Uterus (tissue), 4 donors: ENCODE measurements at regions of chr14 and their contacts with region 1.

Region 1: GRCh38 chr14:32576088-32576795 is 247.1 kb downstream of the AKAP6 start:
- DNase-seq: peak; percentile 36 to 57
- H3K4me3 ChIP-seq: no peak overlapping the region
- H3K27ac ChIP-seq: no peak overlapping the region
- H3K4me1 ChIP-seq: no peaks in the 10 kb centered on the region
- H3K27me3 ChIP-seq: no peaks in the 10 kb centered on the region
- CTCF ChIP-seq: peak; percentile 84 to 97 (median 90)
- POLR2A ChIP-seq: no peak

Region 2: DNA sequence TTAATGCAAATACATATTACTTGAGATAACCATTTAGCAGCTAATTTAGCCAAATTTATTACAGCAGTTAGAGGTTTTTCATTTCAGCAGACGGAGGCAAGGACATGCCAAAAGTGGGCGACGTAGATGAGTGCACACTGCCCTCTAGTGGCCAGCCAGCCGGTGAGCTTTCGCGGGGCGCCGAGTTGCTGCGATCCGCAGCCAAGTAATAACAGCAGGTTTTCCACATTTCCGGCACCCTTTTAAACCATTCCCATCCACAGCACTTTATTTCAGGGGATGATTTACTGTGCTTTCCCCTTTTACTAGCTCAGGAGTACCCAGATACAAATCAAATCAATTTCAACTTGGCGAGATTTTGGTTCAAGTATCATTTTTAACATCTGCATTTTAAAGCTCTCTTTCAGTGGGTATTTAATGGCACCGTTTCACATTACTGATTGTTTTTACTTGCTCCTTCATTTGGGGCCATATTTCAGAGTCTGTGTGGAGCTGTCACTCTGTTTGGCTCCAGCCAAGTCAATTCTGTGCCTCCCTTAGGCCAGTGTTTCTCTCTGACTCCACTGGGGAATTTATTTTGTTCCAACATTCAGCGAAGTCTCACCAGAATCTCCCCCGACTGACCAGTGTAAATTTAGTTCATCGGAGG is 1216.6 kb after region 1 on chr14:
- intact Hi-C with region 1: loop called (anchors 10 kb)
- DNase-seq: peak; percentile 77 to 90
- H3K4me3 ChIP-seq: peak overlapping the region in 1 of 2 donors; percentile 19
- H3K27ac ChIP-seq: peak overlapping the region in 1 of 2 donors; percentile 66
- H3K4me1 ChIP-seq: no peaks in the 10 kb centered on the region
- H3K27me3 ChIP-seq: no peaks in the 10 kb centered on the region
- CTCF ChIP-seq: peak; percentile 74 to 93 (median 88)
- POLR2A ChIP-seq: no peak